B cell (primary cell): ENCODE measurements at regions of chr5 and their contacts with region 1.

Region 1: DNA sequence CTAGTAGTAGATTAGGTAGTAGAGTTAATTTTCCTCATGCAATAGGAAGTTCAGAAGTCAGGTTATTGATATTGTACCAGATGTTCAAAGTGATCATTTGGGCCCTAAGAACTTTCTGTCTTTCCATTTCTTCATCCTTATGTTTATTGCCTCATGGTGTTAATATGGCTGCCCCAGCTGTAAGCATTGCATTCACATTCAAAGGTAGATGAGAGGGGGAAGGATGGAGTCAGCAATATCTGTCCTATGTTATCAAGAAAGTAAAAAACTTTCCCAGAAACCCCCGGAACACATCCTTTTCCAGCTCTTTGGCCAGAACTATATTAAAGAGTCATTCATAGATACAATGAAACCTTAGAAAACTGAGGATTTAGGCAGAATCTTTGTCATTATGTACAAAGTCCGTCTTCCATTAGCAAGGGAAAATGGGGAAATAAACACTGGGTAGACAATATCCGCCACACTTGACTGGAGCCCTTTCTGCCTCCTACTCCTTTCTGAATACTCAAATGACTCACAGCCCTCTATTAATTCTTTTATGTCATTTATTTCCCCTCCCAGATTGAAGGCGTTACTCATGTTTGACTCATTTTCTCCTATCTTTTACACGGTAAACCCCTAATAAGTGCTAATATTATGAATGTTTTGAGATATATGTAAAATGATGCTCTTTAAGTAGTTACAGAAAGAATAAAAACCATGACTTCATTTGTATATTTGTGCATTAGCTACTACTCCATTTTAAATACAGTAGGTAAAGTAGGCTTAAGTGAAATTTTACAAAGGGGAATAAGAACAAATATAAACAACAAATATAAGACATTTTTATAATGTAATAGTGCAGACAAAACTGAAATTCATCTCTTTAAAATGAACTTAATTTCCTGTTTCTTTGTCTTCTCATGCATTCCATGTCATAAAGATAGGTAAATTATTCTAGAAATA is 127.6 kb downstream of the SLF1 start:
- DNase-seq: peak; percentile 16
- ATAC-seq: peak; percentile 55
- H3K4me3 ChIP-seq: no peak overlapping the region
- H3K4me3 Mint-ChIP-seq: peak overlapping the region; percentile 54
- H3K27ac ChIP-seq: no peak overlapping the region
- H3K27ac Mint-ChIP-seq: peak overlapping the region; percentile 6
- H3K4me1 ChIP-seq: peaks cover 13 to 19% of the 10 kb centered on the region in 2 donors
- H3K4me1 Mint-ChIP-seq: peaks cover 37% of the 10 kb centered on the region
- H3K27me3 ChIP-seq: no peaks in the 10 kb centered on the region
- H3K27me3 Mint-ChIP-seq: no peaks in the 10 kb centered on the region
- CTCF ChIP-seq: no peak

Region 2: GRCh38 chr5:94793113-94793815 is 47.2 kb after region 1 on chr5:
- CTCF ChIA-PET with region 1: no interaction called
- POLR2A ChIA-PET with region 1: no interaction called
- intact Hi-C with region 1: loop called (anchors 2 kb)
- DNase-seq: peak; percentile 31
- ATAC-seq: peak; percentile 92
- H3K4me3 ChIP-seq: no peak overlapping the region
- H3K4me3 Mint-ChIP-seq: peak overlapping the region; percentile 62
- H3K27ac ChIP-seq: peak overlapping the region in 1 of 2 donors; percentile 2
- H3K27ac Mint-ChIP-seq: peak overlapping the region; percentile 82
- H3K4me1 ChIP-seq: peaks cover 11 to 31% of the 10 kb centered on the region in 2 donors
- H3K4me1 Mint-ChIP-seq: peaks cover 27% of the 10 kb centered on the region
- H3K27me3 ChIP-seq: no peaks in the 10 kb centered on the region
- H3K27me3 Mint-ChIP-seq: no peaks in the 10 kb centered on the region
- CTCF ChIP-seq: no peak

Region 3: GRCh38 chr5:94849821-94850736 is 104.0 kb after region 1 on chr5:
- CTCF ChIA-PET with region 1: no interaction called
- POLR2A ChIA-PET with region 1: no interaction called
- intact Hi-C with region 1: loop called (anchors 10 kb)
- DNase-seq: peak; percentile 41
- ATAC-seq: peak; percentile 76
- H3K4me3 ChIP-seq: no peak overlapping the region
- H3K4me3 Mint-ChIP-seq: no peak overlapping the region
- H3K27ac ChIP-seq: no peak overlapping the region
- H3K27ac Mint-ChIP-seq: no peak overlapping the region
- H3K4me1 ChIP-seq: no peaks in the 10 kb centered on the region
- H3K4me1 Mint-ChIP-seq: peaks cover 3% of the 10 kb centered on the region
- H3K27me3 ChIP-seq: no peaks in the 10 kb centered on the region
- H3K27me3 Mint-ChIP-seq: no peaks in the 10 kb centered on the region
- CTCF ChIP-seq: peak; percentile 64

Region 4: DNA sequence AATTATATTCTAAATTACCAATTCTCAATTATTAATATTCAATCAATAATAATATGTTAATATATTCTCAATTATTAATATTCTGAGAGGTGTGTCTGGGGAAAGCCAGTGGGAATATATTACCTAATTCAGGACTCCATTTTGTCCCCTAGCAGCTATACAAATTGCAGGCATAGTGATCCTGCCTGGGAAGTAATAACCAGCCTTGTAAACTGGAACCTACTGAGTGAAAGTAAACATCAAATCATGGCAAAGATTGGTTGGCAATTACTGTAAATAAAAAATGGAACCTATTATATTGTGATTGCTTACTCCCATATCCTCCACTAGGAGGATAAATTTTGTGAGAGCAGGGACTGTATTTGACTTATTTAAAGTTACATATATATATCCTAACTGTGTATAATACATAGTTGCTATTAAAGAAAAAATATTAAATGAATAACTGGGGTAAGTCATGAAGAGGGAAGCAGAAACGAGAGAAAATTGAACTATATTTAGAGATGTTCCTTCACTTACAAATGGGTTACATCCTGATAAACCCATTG is 1366.1 kb after region 1 on chr5:
- CTCF ChIA-PET with region 1: no interaction called
- POLR2A ChIA-PET with region 1: no interaction called
- intact Hi-C with region 1: no loop called
- DNase-seq: no peak
- ATAC-seq: no peak
- H3K4me3 ChIP-seq: no peak overlapping the region
- H3K4me3 Mint-ChIP-seq: no peak overlapping the region
- H3K27ac ChIP-seq: no peak overlapping the region
- H3K27ac Mint-ChIP-seq: no peak overlapping the region
- H3K4me1 ChIP-seq: no peaks in the 10 kb centered on the region
- H3K4me1 Mint-ChIP-seq: no peaks in the 10 kb centered on the region
- H3K27me3 ChIP-seq: no peaks in the 10 kb centered on the region
- H3K27me3 Mint-ChIP-seq: peaks cover 4% of the 10 kb centered on the region
- CTCF ChIP-seq: no peak